Ascending aorta (tissue), 2 donors: ENCODE measurements at regions of chrX and their contacts with region 1.

Region 1: DNA sequence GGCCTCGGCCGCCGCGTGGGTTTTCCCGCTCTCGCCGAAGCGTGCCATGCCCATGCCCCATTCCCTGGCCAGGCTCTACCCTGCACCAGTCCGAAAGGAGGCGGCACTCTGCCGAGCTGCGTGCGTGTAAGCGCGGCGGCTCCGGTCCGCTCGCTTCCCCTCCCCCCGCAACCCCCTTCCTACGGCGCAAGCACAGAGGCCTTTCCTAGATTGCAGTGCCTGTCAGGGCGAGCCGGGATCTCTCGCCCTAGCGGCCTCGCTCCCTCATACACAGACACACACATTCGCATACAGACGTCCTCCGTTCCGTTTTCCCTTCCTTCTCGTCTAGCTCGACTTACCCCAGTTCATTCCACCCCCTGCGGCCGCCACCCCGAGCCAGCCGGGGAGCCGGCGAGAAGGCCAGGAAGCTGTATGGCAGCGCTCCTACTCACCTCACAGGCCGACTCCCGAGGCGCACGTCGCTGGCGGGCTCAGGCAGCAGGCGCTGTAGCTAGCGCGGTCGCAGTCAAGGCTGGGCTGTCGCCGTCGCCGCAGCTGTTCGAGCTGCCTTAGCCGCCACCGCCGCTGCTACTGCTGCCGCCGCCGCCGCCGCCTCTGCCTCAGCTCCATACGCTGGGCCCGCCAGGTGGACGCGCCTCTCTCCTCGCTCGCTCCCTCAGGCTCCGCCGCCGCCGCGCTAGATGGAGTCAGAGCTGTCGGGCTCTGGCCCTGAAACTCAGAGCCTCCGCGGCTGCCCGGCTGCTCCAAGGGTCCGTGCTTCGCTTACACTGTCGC is 615 bp downstream of the NEXMIF start:
- DNase-seq: peak in 1 of 2 donors; percentile 68
- H3K4me3 ChIP-seq: peak overlapping the region; percentile 63 to 70
- H3K27ac ChIP-seq: peak overlapping the region; percentile 81 to 85
- H3K4me1 ChIP-seq: no peaks in the 10 kb centered on the region
- H3K27me3 ChIP-seq: no peaks in the 10 kb centered on the region
- CTCF ChIP-seq: no peak

Region 2: GRCh38 chrX:75303795-75304194 is 379.2 kb after region 1 on chrX:
- intact Hi-C with region 1: loop called (anchors 10 kb)
- DNase-seq: no peak
- H3K4me3 ChIP-seq: no peak overlapping the region
- H3K27ac ChIP-seq: peak overlapping the region in 1 of 2 donors; percentile 8
- H3K4me1 ChIP-seq: peaks cover 0 to 4% of the 10 kb centered on the region in 2 donors
- H3K27me3 ChIP-seq: no peaks in the 10 kb centered on the region
- CTCF ChIP-seq: no peak

Region 3: DNA sequence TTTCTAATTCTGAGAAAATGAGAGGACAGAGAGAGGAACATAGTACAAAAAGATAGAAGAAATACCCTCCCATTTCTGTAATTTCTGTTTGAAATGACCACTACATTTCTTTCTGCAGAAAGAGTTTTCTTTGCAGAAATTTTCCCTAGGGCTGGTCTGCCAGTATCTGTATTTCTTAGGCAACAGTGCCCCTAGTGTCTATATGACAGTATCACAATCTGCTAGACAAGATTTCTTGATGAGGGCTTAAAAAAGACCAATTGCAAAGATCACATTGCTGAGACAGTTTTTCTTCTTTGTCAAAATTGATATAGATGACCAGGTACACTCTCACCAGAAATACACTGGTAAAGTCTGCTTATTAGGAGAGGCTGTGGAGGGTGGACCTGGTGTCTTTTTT is 679.2 kb after region 1 on chrX:
- intact Hi-C with region 1: loop called (anchors 10 kb)
- DNase-seq: no peak
- H3K4me3 ChIP-seq: no peak overlapping the region
- H3K27ac ChIP-seq: no peak overlapping the region
- H3K4me1 ChIP-seq: no peaks in the 10 kb centered on the region
- H3K27me3 ChIP-seq: no peaks in the 10 kb centered on the region
- CTCF ChIP-seq: peak; percentile 25 to 75 (median 70)